Ascending aorta (tissue), 2 donors: ENCODE measurements at regions of chr1 and their contacts with region 1.

Region 1: GRCh38 chr1:230104395-230105244 is 37.6 kb downstream of the GALNT2 start:
- DNase-seq: peak; percentile 97 to 100
- H3K4me3 ChIP-seq: peak overlapping the region; percentile 2 to 43
- H3K27ac ChIP-seq: peak overlapping the region; percentile 87 to 90
- H3K4me1 ChIP-seq: peaks cover 14 to 65% of the 10 kb centered on the region in 2 donors
- H3K27me3 ChIP-seq: no peaks in the 10 kb centered on the region
- CTCF ChIP-seq: peak in 2 of 3 experiments; percentile 11 to 21

Region 2: GRCh38 chr1:229558571-229559335 is 545.9 kb before region 1 on chr1 and contains the start of gene ABCB10:
- intact Hi-C with region 1: no loop called
- DNase-seq: peak; percentile 87 to 98
- H3K4me3 ChIP-seq: peak within 1 kb of the TSS; percentile 91 to 94
- H3K27ac ChIP-seq: peak within 1 kb of the TSS; percentile 85 to 94
- H3K4me1 ChIP-seq: peaks cover 3 to 38% of the 10 kb centered on the region in 2 donors
- H3K27me3 ChIP-seq: no peaks in the 10 kb centered on the region
- CTCF ChIP-seq: peak; percentile 81 to 89 (median 87)
- total RNA-seq, gene ABCB10: 25.2 TPM

Region 3: GRCh38 chr1:230084138-230084880 is 20.3 kb before region 1 on chr1:
- intact Hi-C with region 1: loop called (anchors 2 kb)
- DNase-seq: peak; percentile 75 to 95
- H3K4me3 ChIP-seq: peak overlapping the region in 1 of 2 donors; percentile 12
- H3K27ac ChIP-seq: peak overlapping the region; percentile 92 to 95
- H3K4me1 ChIP-seq: peaks cover 30 to 66% of the 10 kb centered on the region in 2 donors
- H3K27me3 ChIP-seq: no peaks in the 10 kb centered on the region
- CTCF ChIP-seq: no peak

Region 4: GRCh38 chr1:230091473-230092231 is 13.0 kb before region 1 on chr1:
- intact Hi-C with region 1: loop called (anchors 1 kb)
- DNase-seq: no peak
- H3K4me3 ChIP-seq: no peak overlapping the region
- H3K27ac ChIP-seq: peak overlapping the region; percentile 58 to 95
- H3K4me1 ChIP-seq: peaks cover 13 to 43% of the 10 kb centered on the region in 2 donors
- H3K27me3 ChIP-seq: no peaks in the 10 kb centered on the region
- CTCF ChIP-seq: no peak